ENCODE measurements at regions of chr14 and their contacts with region 1.

Region 1: DNA sequence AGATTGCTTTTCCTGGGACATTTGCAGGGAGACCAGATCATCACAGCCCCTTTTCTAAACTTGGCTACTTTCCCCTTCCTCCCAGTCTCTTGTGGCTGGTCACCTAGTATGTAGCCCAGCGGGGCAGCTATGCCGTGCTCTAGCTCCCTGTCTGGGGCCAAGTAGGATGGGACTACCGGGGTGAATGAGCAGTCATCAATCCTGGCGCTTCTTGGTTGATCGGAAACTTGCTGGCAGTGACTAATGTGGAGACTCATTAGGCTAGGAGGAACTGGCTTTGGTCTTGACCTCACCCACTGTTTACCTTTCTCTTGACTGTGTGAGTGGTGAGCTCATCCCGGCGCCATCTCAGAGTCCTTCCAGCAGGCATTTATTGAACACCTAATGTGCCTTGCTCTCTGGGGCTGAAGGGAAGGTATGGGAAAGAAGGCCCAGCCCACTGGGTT is 15.9 kb downstream of the PLEKHG3 start:
- DNase-seq: no peak
- ATAC-seq: peak in 1 of 2 donors; percentile 13

Region 2: DNA sequence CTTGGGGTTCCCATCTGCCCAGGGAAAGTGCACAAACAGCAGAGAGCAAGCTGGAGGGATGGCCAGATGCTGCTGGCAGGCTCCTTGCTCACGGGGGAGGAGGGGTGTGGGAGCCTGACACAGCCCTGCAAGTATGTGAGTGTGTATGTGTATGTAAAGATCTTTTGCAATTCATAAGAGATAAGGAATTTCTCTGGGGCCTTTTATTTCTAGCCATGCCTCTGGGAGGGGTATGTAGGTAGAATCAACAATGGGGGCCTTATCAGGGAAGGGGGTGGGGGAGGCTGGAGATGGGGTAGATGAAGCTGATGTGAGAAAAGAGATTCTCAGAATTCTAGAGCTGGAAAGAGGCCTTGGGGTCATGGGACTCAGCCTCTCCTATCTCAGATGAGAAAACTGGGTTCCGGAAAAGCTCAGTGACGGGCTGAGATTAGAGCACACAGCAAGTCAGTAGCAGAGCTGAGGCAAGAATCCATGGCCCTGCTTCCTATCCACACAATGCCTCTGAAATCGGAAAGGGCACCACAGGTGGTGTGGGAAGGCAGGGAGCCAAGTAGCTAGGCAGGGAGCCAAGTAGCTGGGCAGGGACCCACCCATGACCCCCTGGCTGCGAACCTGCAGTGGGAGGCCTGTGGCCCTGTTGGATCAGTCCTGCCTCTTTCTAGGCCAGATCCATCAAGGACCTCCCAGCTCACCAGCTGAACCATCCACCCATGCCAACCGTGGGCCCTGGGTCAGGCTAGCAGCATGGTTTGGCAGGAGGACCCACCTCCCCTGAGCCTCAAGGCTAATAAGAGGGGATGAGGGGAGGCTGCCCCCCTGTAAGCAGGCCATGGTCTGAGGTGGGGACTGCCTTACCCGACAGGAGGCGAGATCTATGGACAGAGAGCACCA is 38.8 kb after region 1 on chr14:
- intact Hi-C with region 1: loop called in 1 of 2 experiments (anchors 5 kb)
- DNase-seq: peak; percentile 62
- ATAC-seq: peak in 1 of 2 donors; percentile 65

Region 3: DNA sequence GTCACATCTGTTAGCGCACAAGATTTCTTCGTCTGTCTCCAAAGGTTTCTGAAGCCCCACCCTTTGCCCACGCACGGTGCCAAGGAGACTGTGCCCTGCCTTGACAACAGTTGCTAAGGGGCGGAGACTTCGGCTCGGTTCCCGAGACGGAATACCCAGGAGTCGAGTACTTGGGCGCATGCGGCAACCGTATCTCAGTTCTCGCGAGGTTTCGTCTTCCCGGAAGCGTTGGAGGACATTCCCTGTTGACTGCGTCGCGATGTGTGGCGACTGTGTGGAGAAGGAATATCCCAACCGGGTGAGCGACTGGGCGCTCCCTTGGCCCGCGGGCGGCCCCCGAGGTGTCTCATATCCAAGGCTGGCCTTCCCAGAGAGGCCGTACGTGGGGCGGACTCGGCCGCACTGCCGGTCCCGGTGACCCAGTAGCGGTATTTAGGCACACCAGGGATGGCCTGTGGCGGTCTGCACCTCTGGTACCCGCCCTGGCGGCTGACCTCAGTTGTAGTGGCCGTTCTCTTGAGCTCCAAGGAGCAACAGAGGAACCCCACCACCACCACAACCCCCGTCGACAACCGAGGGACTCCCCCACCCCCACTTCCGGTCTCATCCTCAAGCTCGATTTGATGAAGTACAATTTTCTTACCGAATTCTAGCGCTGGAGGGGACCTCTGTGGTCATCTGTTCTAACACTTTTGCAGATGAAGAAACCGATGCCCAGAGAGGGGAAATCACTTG is 194.2 kb after region 1 on chr14 and contains the start of gene CHURC1:
- intact Hi-C with region 1: no loop called
- DNase-seq: peak; percentile 99
- ATAC-seq: peak; percentile 100
- total RNA-seq, gene CHURC1: 89.1 to 97.4 TPM

Measured in left cardiac atrium (tissue), 4 donors.